ENCODE measurements at regions of chr10 and their contacts with region 1.

Region 1: GRCh38 chr10:12489806-12490205 is 140.5 kb downstream of the CAMK1D start:
- DNase-seq: no peak
- ATAC-seq: no peak
- H3K4me3 ChIP-seq: no peak overlapping the region
- H3K27ac ChIP-seq: no peak overlapping the region
- H3K4me1 ChIP-seq: no peaks in the 10 kb centered on the region
- H3K27me3 ChIP-seq: no peaks in the 10 kb centered on the region
- CTCF ChIP-seq: no peak

Region 2: DNA sequence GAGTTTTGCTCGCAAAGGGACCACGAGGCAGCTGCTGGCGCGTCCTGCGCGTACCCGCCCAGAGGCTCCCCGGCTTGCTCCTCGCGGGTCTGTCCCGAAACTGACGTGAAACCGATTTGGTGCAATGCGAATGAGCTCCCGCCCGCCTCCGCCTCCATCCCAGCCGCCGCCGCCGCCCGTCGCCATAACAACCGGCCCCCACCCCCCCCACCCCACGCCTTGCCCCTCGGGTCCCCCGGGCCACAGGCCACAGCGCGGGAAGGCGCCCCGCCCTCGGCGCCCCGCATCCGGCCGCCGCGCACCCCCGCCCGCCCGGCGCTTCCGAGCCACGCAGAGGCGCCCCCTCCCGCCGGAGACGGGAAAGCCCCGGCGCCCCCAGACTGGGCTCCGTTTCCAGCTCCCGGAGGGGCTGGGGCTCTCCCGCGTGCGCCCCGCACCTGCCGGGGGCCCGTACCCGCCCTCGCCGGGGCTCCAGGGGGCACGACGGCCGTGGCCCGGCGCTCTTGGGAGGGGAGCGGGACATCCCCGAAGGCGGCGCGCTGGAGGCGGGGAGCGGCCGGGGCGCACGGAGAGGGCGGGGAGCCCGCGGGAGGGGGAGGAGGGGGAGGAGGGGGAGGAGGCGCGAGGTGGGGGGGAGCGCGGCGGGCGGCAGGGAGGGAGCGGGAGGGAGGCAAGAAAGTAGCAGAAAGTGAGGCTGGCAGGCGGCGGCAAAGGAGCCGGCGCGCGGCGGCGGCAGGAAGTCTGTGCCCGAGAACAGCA is 140.8 kb before region 1 on chr10 and contains the start of gene CAMK1D:
- CTCF ChIA-PET with region 1: interaction called, 4 read pairs
- POLR2A ChIA-PET with region 1: interaction called, 13 read pairs
- in situ Hi-C with region 1: no loop called
- intact Hi-C with region 1: no loop called
- DNase-seq: no peak
- ATAC-seq: peak; percentile 74
- H3K4me3 ChIP-seq: peak within 1 kb of the TSS; percentile 55 to 75
- H3K27ac ChIP-seq: no peak within 1 kb of the TSS
- H3K4me1 ChIP-seq: no peaks in the 10 kb centered on the region
- H3K27me3 ChIP-seq: no peaks in the 10 kb centered on the region
- CTCF ChIP-seq: peak; percentile 69
- total RNA-seq, gene CAMK1D: 5.7 TPM